GM12878 (cell line): ENCODE measurements at regions of chr4 and their contacts with region 1.

Region 1: GRCh38 chr4:15805583-15806517 is 27.7 kb downstream of the CD38 start:
- DNase-seq: peak; percentile 48
- ATAC-seq: peak; percentile 76
- H3K4me3 ChIP-seq: no peak overlapping the region
- H3K27ac ChIP-seq: no peak overlapping the region
- H3K4me1 ChIP-seq: peaks cover 12% of the 10 kb centered on the region; the same call in 1 of the 2 replicates
- H3K27me3 ChIP-seq: no peaks in the 10 kb centered on the region
- CTCF ChIP-seq: peak; percentile 60 to 75 (median 69)
- EP300 ChIP-seq: peak in 1 of 2 experiments; percentile 40; a peak in 1 of 4 replicates
- POLR2A ChIP-seq: no peak
- RAD21 ChIP-seq: peak; percentile 84

Region 2: DNA sequence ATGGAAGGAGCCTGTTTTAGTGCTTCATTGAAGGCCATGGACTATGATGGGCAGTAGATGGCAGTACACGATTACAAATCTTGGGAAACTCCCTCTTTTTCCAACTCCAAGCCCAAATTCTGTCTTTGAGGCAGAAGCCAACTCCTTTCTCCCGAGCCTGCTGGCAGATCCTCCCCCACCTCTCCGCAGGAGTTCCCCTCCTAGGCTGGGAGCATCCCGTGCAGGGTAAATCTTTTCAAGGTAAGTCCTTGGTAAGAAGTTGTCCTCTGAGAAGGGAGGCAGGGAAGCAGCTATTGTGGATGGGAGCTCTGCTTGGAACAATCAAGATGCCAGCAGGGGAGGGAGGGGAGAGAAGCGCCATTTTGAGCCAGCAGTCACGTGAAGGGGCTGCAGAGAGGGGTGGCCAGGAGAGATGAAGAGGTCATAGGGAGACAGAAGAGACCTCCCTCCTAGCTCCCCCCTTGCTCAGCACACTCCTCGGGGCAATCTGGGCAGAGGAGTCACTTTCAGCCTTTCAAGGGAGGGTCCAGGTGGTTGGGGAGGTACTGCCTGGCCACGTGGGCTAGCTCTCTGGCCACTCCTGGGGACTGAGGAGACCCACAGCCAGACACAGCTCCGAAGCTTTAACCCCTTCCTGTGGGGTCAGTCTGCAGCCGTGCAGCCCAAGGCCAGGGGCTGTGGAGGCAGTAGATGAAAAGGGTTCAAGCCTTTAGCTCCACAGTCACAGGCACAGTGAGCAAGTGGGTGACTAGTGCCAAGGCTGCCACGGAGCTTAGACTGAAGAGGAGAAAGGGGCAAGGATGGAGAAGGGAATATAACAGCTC is 326.5 kb before region 1 on chr4:
- CTCF ChIA-PET with region 1: interaction called, 8 read pairs
- POLR2A ChIA-PET with region 1: no interaction called
- RAD21 ChIA-PET with region 1: no interaction called
- SMC1A ChIA-PET with region 1: interaction called, 3 read pairs
- in situ Hi-C with region 1: no loop called
- intact Hi-C with region 1: loop called (anchors 2 kb)
- DNase-seq: no peak
- ATAC-seq: peak; percentile 84
- H3K4me3 ChIP-seq: no peak overlapping the region
- H3K27ac ChIP-seq: no peak overlapping the region
- H3K4me1 ChIP-seq: no peaks in the 10 kb centered on the region
- H3K27me3 ChIP-seq: no peaks in the 10 kb centered on the region
- CTCF ChIP-seq: peak; percentile 51 to 74 (median 57); a peak in 5 of 6 replicates
- EP300 ChIP-seq: no peak
- POLR2A ChIP-seq: no peak
- RAD21 ChIP-seq: peak; percentile 79

Region 3: GRCh38 chr4:15756361-15756861 is 49.4 kb before region 1 on chr4:
- CTCF ChIA-PET with region 1: interaction called, 15 read pairs
- POLR2A ChIA-PET with region 1: no interaction called
- RAD21 ChIA-PET with region 1: interaction called, 18 read pairs
- SMC1A ChIA-PET with region 1: interaction called, 14 read pairs
- in situ Hi-C with region 1: no loop called
- intact Hi-C with region 1: no loop called
- DNase-seq: peak; percentile 66
- ATAC-seq: peak; percentile 95
- H3K4me3 ChIP-seq: 0 out of 2 replicates have a peak overlapping the region, but pooled peaks have one; percentile 18
- H3K27ac ChIP-seq: no peak overlapping the region
- H3K4me1 ChIP-seq: peaks cover 18% of the 10 kb centered on the region
- H3K27me3 ChIP-seq: no peaks in the 10 kb centered on the region
- CTCF ChIP-seq: peak; percentile 35 to 67 (median 58); a peak in 5 of 6 replicates
- EP300 ChIP-seq: no peak
- POLR2A ChIP-seq: no peak
- RAD21 ChIP-seq: 0 out of 2 replicates have a peak, but pooled peaks have one; percentile 9

Region 4: GRCh38 chr4:15794905-15795304 is 10.9 kb before region 1 on chr4:
- CTCF ChIA-PET with region 1: interaction called, 9 read pairs
- POLR2A ChIA-PET with region 1: no interaction called
- RAD21 ChIA-PET with region 1: interaction called, 8 read pairs
- SMC1A ChIA-PET with region 1: interaction called, 17 read pairs
- in situ Hi-C with region 1: no loop called
- intact Hi-C with region 1: no loop called
- DNase-seq: no peak
- ATAC-seq: peak; percentile 53
- H3K4me3 ChIP-seq: no peak overlapping the region
- H3K27ac ChIP-seq: no peak overlapping the region
- H3K4me1 ChIP-seq: peaks cover 7% of the 10 kb centered on the region; the same call in 1 of the 2 replicates
- H3K27me3 ChIP-seq: no peaks in the 10 kb centered on the region
- CTCF ChIP-seq: no peak
- EP300 ChIP-seq: peak in 1 of 2 experiments; percentile 52; a peak in 1 of 4 replicates
- POLR2A ChIP-seq: no peak
- RAD21 ChIP-seq: no peak

Region 5: DNA sequence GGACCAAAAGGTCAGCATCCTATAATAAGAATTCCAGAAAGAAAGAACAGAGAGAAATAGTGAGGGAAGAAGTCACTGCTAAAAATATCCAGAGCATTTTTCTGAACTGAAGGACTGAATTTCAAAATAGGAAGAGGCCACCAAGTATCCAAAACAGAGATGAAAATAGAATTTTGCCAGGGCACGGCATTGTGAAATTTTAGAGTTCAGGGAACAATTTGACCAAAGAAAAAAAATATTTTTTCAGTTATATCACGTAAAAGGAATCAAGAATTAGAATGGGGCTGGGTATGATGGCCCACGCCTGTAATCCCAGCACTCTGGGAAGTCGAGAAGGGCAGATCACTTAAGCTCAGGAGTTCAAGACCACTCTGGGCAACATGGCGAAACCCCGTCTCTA is 67.3 kb after region 1 on chr4:
- CTCF ChIA-PET with region 1: interaction called, 188 read pairs
- POLR2A ChIA-PET with region 1: no interaction called
- RAD21 ChIA-PET with region 1: interaction called, 12 read pairs
- SMC1A ChIA-PET with region 1: interaction called, 5 read pairs
- in situ Hi-C with region 1: no loop called
- intact Hi-C with region 1: no loop called
- DNase-seq: no peak
- ATAC-seq: no peak
- H3K4me3 ChIP-seq: no peak overlapping the region
- H3K27ac ChIP-seq: no peak overlapping the region
- H3K4me1 ChIP-seq: no peaks in the 10 kb centered on the region
- H3K27me3 ChIP-seq: no peaks in the 10 kb centered on the region
- CTCF ChIP-seq: no peak
- EP300 ChIP-seq: no peak
- POLR2A ChIP-seq: no peak
- RAD21 ChIP-seq: no peak

Region 6: DNA sequence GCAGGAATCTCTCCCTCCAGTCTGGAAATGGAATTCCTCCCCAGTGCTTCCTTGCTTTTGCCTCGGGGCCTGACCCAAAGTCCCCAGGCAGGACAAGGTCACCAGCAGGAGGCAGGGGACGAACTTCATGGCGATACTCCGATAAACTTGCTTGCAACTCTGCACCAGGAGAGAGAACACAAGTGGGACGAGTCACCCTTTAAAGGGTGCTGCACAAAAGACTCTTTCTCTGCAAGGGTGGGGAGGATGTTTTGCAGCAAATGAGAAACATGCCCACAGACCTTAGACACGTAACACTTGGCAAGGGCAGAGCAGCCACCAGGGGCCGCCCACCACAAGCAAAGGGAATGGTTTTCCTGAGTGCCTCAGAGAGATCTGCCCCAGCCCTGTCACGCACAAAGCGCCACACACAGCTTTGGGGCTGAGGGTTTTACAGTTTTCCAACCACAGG is 157.2 kb after region 1 on chr4 and contains the start of gene FGFBP2:
- CTCF ChIA-PET with region 1: interaction called, 11 read pairs
- POLR2A ChIA-PET with region 1: no interaction called
- RAD21 ChIA-PET with region 1: no interaction called
- SMC1A ChIA-PET with region 1: interaction called, 6 read pairs
- in situ Hi-C with region 1: loop called (anchors 5 kb)
- intact Hi-C with region 1: no loop called
- DNase-seq: no peak
- ATAC-seq: peak; percentile 89
- H3K4me3 ChIP-seq: no peak within 1 kb of the TSS
- H3K27ac ChIP-seq: no peak within 1 kb of the TSS
- H3K4me1 ChIP-seq: peaks cover 5% of the 10 kb centered on the region; the same call in 1 of the 2 replicates
- H3K27me3 ChIP-seq: no peaks in the 10 kb centered on the region
- CTCF ChIP-seq: peak; percentile 36 to 47 (median 44); a peak in 5 of 6 replicates
- EP300 ChIP-seq: no peak
- POLR2A ChIP-seq: no peak
- RAD21 ChIP-seq: no peak
- polyA plus RNA-seq, gene FGFBP2: not detected

Region 7: DNA sequence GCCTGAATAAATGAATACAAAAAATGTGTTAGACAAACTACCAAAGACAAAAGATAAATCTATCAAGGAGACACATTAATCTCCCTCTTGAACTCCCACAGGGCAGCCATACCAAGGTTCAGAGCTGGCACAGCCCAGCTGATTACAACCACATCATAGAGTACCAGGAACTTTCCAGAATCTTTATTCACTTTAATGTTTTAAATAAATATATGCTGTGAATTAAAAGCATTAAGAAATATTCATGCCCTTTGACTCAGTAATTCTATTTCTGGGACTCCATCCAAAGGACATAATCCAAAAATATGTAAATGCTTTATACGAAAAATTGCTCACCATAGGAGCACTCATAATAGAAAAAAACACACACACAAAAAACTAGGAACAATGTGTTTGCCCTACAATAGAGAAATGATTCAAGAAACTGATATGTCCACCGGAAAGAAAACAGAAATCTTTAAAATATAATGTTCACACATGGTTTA is 966.6 kb after region 1 on chr4:
- CTCF ChIA-PET with region 1: no interaction called
- POLR2A ChIA-PET with region 1: no interaction called
- RAD21 ChIA-PET with region 1: no interaction called
- SMC1A ChIA-PET with region 1: no interaction called
- in situ Hi-C with region 1: no loop called
- intact Hi-C with region 1: no loop called
- DNase-seq: no peak
- ATAC-seq: no peak
- H3K4me3 ChIP-seq: no peak overlapping the region
- H3K27ac ChIP-seq: no peak overlapping the region
- H3K4me1 ChIP-seq: no peaks in the 10 kb centered on the region
- H3K27me3 ChIP-seq: no peaks in the 10 kb centered on the region
- CTCF ChIP-seq: no peak
- EP300 ChIP-seq: no peak
- POLR2A ChIP-seq: no peak
- RAD21 ChIP-seq: no peak